ENCODE measurements at regions of chr1 and their contacts with region 1.

Region 1: GRCh38 chr1:168082008-168082876 is 54.5 kb downstream of the GPR161 start:
- DNase-seq: peak; percentile 17
- ATAC-seq: peak; percentile 95
- H3K4me3 ChIP-seq: no peak overlapping the region
- H3K27ac ChIP-seq: no peak overlapping the region
- H3K4me1 ChIP-seq: no peaks in the 10 kb centered on the region
- H3K27me3 ChIP-seq: no peaks in the 10 kb centered on the region
- CTCF ChIP-seq: peak; percentile 92 to 98 (median 95); a peak in 5 of 6 replicates
- EP300 ChIP-seq: no peak
- POLR2A ChIP-seq: no peak
- RAD21 ChIP-seq: peak; percentile 83

Region 2: DNA sequence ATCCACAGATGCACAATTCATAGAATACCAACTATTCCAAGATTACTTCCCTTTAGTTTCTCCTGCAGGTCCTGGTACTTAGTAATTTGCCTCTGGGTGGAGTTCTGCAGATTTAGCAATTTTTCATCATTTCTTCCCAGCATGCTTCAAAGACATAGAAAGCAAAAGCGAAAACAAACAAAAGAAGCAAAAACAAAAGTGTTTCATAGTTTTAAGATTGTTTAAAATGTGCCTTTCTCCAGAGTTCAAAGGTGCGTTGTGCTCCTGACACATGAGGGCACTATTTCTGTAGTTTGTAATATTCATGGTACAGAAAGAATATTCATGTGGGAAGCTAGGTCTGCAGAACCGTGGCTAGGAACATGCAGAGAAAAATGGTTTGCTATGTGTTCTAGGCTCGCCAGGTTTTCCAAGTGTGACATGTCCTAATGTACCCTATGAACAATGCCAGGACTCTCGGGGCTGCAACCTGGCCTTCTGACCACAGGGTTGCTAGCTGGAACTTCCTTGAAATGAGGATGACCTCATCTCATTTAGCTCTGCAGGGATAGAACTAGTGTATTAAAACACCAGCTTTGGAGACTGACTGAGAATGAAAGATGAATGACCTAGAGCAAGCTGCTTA is 482.2 kb before region 1 on chr1:
- CTCF ChIA-PET with region 1: interaction called, 20 read pairs
- POLR2A ChIA-PET with region 1: no interaction called
- RAD21 ChIA-PET with region 1: interaction called, 11 read pairs
- SMC1A ChIA-PET with region 1: interaction called, 13 read pairs
- in situ Hi-C with region 1: no loop called
- intact Hi-C with region 1: no loop called
- DNase-seq: peak; percentile 79
- ATAC-seq: peak; percentile 93
- H3K4me3 ChIP-seq: peak overlapping the region; percentile 4; the same call in 1 of the 2 replicates
- H3K27ac ChIP-seq: peak overlapping the region; percentile 55
- H3K4me1 ChIP-seq: peaks cover 31% of the 10 kb centered on the region
- H3K27me3 ChIP-seq: no peaks in the 10 kb centered on the region
- CTCF ChIP-seq: peak; percentile 58 to 81 (median 80); a peak in 5 of 6 replicates
- EP300 ChIP-seq: no peak
- POLR2A ChIP-seq: no peak
- RAD21 ChIP-seq: peak; percentile 90

Region 3: GRCh38 chr1:167803358-167804207 is 278.7 kb before region 1 on chr1:
- CTCF ChIA-PET with region 1: interaction called, 13 read pairs
- POLR2A ChIA-PET with region 1: no interaction called
- RAD21 ChIA-PET with region 1: interaction called, 3 read pairs
- SMC1A ChIA-PET with region 1: interaction called, 5 read pairs
- in situ Hi-C with region 1: no loop called
- intact Hi-C with region 1: loop called (anchors 1 kb)
- DNase-seq: peak; percentile 82
- ATAC-seq: peak; percentile 100
- H3K4me3 ChIP-seq: no peak overlapping the region
- H3K27ac ChIP-seq: no peak overlapping the region
- H3K4me1 ChIP-seq: peaks cover 12% of the 10 kb centered on the region
- H3K27me3 ChIP-seq: no peaks in the 10 kb centered on the region
- CTCF ChIP-seq: peak; percentile 95 to 100 (median 95); a peak in 5 of 6 replicates
- EP300 ChIP-seq: no peak
- POLR2A ChIP-seq: no peak
- RAD21 ChIP-seq: peak; percentile 84

Region 4: DNA sequence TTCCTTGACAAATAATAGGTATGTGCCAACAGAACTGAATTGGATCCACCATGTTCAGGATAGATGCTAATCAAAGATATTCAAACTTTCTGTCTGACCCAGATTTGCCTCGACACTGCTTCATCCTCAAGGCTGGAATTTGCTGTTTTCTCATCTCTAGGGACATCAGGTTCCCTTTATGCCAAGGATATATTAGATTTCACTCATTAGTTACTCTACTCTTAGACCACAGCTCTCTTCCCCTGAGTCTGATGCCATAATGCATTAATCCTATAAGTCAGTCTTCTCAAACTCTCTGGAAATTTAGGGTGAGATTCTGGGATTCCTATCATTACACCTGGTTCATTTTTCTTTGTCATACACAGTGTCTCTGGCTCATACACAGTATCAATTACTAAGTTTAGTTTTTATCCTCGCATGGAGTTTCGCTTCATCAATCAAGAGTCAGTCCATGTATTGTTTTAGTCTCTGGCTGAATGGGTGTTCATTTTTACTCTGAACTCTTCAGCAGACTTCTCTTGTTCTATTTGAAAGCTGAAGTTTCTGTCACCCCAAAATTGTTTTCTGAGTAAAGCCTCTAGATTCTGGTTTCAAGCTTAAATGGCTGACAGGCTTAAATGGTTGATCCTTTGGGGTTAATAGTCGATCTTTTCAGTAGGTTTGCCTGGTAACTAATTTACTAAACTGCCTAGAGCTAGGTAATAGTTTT is 155.0 kb before region 1 on chr1:
- CTCF ChIA-PET with region 1: interaction called, 13 read pairs
- POLR2A ChIA-PET with region 1: no interaction called
- RAD21 ChIA-PET with region 1: interaction called, 4 read pairs
- SMC1A ChIA-PET with region 1: interaction called, 9 read pairs
- in situ Hi-C with region 1: no loop called
- intact Hi-C with region 1: no loop called
- DNase-seq: no peak
- ATAC-seq: peak; percentile 73
- H3K4me3 ChIP-seq: peak overlapping the region; percentile 17; the same call in 1 of the 2 replicates
- H3K27ac ChIP-seq: peak overlapping the region; percentile 15; the same call in 1 of the 2 replicates
- H3K4me1 ChIP-seq: peaks cover 5% of the 10 kb centered on the region; the same call in 1 of the 2 replicates
- H3K27me3 ChIP-seq: no peaks in the 10 kb centered on the region
- CTCF ChIP-seq: no peak
- EP300 ChIP-seq: no peak
- POLR2A ChIP-seq: no peak
- RAD21 ChIP-seq: no peak

Region 5: DNA sequence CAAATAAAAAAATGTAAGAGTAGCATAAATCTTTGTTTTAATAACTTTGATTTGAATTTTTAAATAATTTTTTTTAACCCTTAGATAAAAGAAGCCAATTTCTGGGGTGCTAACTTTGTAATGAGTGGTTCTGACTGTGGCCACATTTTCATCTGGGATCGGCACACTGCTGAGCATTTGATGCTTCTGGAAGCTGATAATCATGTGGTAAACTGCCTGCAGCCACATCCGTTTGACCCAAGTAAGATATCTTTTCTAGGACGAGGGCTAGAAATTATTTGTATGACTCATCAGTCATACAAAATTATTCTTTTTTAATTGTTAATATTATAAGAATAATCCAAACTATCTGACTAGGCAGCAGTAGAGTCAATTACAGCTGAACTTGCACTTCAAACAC is 16.7 kb before region 1 on chr1:
- CTCF ChIA-PET with region 1: interaction called, 95 read pairs
- POLR2A ChIA-PET with region 1: interaction called, 3 read pairs
- RAD21 ChIA-PET with region 1: interaction called, 6 read pairs
- SMC1A ChIA-PET with region 1: interaction called, 5 read pairs
- in situ Hi-C with region 1: no loop called
- intact Hi-C with region 1: no loop called
- DNase-seq: no peak
- ATAC-seq: no peak
- H3K4me3 ChIP-seq: no peak overlapping the region
- H3K27ac ChIP-seq: no peak overlapping the region
- H3K4me1 ChIP-seq: no peaks in the 10 kb centered on the region
- H3K27me3 ChIP-seq: no peaks in the 10 kb centered on the region
- CTCF ChIP-seq: no peak
- EP300 ChIP-seq: no peak
- POLR2A ChIP-seq: no peak
- RAD21 ChIP-seq: no peak

Region 6: GRCh38 chr1:168145184-168146159 is 63.2 kb after region 1 on chr1:
- CTCF ChIA-PET with region 1: interaction called, 42 read pairs
- POLR2A ChIA-PET with region 1: no interaction called
- RAD21 ChIA-PET with region 1: interaction called, 18 read pairs
- SMC1A ChIA-PET with region 1: interaction called, 4 read pairs
- in situ Hi-C with region 1: no loop called
- intact Hi-C with region 1: loop called (anchors 2 kb)
- DNase-seq: peak; percentile 52
- ATAC-seq: peak; percentile 99
- H3K4me3 ChIP-seq: no peak overlapping the region
- H3K27ac ChIP-seq: no peak overlapping the region
- H3K4me1 ChIP-seq: no peaks in the 10 kb centered on the region
- H3K27me3 ChIP-seq: no peaks in the 10 kb centered on the region
- CTCF ChIP-seq: peak; percentile 95 to 99 (median 99)
- EP300 ChIP-seq: no peak
- POLR2A ChIP-seq: no peak
- RAD21 ChIP-seq: peak; percentile 59

Region 7: GRCh38 chr1:168206111-168206510 is 123.9 kb after region 1 on chr1:
- CTCF ChIA-PET with region 1: no interaction called
- POLR2A ChIA-PET with region 1: no interaction called
- RAD21 ChIA-PET with region 1: no interaction called
- SMC1A ChIA-PET with region 1: no interaction called
- in situ Hi-C with region 1: no loop called
- intact Hi-C with region 1: no loop called
- DNase-seq: no peak
- ATAC-seq: no peak
- H3K4me3 ChIP-seq: no peak overlapping the region
- H3K27ac ChIP-seq: no peak overlapping the region
- H3K4me1 ChIP-seq: no peaks in the 10 kb centered on the region
- H3K27me3 ChIP-seq: no peaks in the 10 kb centered on the region
- CTCF ChIP-seq: no peak
- EP300 ChIP-seq: no peak
- POLR2A ChIP-seq: no peak
- RAD21 ChIP-seq: no peak